Activated CD4-positive, alpha-beta memory T cell treated with anti-CD3 and anti-CD28 coated beads, Interleukin-2, amount 10 ng/mL, durations not matched to agents 7 days and 5 days (primary cell): ENCODE measurements at regions of chr3 and their contacts with region 1.

Region 1: GRCh38 chr3:63911873-63912767 is at the start of gene SCAANT1:
- DNase-seq: peak; percentile 80
- H3K4me3 Mint-ChIP-seq: peak within 1 kb of the TSS; percentile 85
- H3K27ac Mint-ChIP-seq: peak within 1 kb of the TSS; percentile 96
- H3K4me1 Mint-ChIP-seq: peaks cover 51% of the 10 kb centered on the region
- H3K27me3 Mint-ChIP-seq: no peaks in the 10 kb centered on the region
- total RNA-seq, gene SCAANT1: not detected

Region 2: GRCh38 chr3:63863148-63864007 is 48.7 kb before region 1 on chr3 and contains the starts of genes ATXN7 and THOC7:
- CTCF ChIA-PET with region 1: interaction called, 3 read pairs
- POLR2A ChIA-PET with region 1: interaction called, 25 read pairs
- DNase-seq: peak; percentile 68
- H3K4me3 Mint-ChIP-seq: peak within 1 kb of the TSS; percentile 95
- H3K27ac Mint-ChIP-seq: peak within 1 kb of the TSS; percentile 90
- H3K4me1 Mint-ChIP-seq: peaks cover 48% of the 10 kb centered on the region
- H3K27me3 Mint-ChIP-seq: no peaks in the 10 kb centered on the region
- total RNA-seq, gene ATXN7: 59.5 to 61.2 TPM
- total RNA-seq, gene THOC7: 78.4 to 79.2 TPM

Region 3: DNA sequence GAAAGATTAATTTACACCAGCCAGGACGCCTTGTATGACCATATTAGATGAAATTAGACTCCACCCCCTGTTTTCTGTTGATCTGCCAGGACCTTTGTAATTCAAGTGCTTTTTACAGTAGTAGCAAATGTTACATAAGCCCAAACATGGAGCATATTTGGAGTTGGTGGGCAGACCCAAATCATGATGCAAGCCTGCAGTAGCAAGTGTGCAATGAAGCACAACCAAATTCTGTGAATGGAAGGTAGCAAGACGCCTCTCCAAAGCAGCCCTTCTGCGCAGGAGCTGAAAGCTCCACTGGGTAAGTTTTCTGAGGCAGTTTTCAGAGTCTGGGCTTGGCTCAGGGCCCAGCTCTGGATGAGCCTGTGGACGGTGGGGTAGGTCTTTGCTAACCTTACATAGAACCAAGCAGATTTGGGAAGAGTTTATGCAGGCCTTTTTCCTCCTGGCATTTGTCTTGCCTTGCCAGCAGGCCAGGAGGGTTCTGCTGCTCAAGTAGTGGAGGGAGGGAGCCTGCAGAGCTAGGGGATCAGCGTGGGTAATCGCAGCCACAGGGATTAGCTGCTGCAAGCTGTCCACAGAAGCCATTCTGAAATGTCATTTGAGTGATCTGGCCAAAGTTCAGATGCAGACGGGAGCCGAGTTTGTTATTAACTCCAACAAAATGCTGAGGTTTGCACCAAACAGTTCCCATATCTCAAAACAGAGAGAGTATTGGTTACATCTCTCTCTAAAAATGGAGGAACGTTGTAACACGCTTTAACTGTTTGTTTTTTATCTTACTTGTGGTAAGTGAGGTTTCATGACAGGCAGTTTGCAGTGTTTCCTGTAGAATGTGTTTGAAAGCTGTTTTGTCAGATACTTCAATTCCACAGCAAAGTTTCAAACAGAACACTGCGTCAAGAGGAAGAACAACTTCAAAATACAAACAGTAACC is 55.8 kb after region 1 on chr3:
- CTCF ChIA-PET with region 1: no interaction called
- POLR2A ChIA-PET with region 1: interaction called, 32 read pairs
- DNase-seq: peak; percentile 49
- H3K4me3 Mint-ChIP-seq: peak overlapping the region; percentile 80
- H3K27ac Mint-ChIP-seq: peak overlapping the region; percentile 98
- H3K4me1 Mint-ChIP-seq: peaks cover 87% of the 10 kb centered on the region
- H3K27me3 Mint-ChIP-seq: no peaks in the 10 kb centered on the region

Region 4: GRCh38 chr3:64224826-64225610 is 312.9 kb after region 1 on chr3 and contains the start of gene PRICKLE2:
- CTCF ChIA-PET with region 1: no interaction called
- POLR2A ChIA-PET with region 1: no interaction called
- DNase-seq: no peak
- H3K4me3 Mint-ChIP-seq: no peak within 1 kb of the TSS
- H3K27ac Mint-ChIP-seq: no peak within 1 kb of the TSS
- H3K4me1 Mint-ChIP-seq: no peaks in the 10 kb centered on the region
- H3K27me3 Mint-ChIP-seq: peaks cover 2% of the 10 kb centered on the region
- total RNA-seq, gene PRICKLE2: not detected